OCI-LY7 (cell line): ENCODE measurements at regions of chr12 and their contacts with region 1.

Region 1: DNA sequence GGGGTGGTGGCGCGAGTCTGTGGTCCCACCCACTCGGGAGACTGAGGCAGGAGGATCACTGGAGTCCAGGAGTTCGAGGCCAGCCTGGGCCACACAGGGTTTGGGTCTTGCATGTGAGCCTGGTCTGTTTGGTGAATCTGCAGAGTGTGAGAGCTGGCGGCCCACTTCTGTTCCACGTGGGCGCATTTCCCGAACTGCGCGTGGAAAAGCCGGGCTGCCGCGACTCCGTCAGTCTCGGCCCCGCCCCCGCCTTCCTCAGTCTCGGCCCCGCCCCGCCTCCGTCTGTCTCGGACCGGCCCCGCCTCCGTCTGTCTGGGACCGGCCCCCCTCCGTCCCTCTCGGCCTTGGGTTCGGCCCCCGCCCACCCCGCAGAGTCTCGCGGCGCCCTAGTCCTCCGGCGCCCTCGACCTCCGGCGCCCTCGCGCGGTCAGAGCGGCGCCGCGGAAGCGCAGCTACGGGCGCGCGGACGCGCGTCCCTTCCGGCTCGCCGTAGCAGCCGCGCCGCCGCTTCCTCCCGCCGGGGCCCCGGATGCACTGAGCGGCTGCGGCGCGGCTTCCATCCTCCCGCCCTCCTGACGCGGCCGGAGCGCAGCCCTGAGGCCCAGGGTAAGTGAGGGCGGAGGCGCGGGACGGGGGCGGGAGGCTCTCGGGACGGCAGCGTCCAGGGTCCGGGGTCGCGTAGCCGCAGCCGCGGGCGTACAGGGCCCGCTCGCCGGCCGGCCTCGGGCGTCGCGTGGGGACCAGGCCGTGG is at the start of gene EP400:
- DNase-seq: peak; percentile 94
- H3K4me3 ChIP-seq: peak within 1 kb of the TSS; percentile 92
- H3K27ac ChIP-seq: peak within 1 kb of the TSS; percentile 55
- H3K4me1 ChIP-seq: peaks cover 7% of the 10 kb centered on the region
- CTCF ChIP-seq: peak; percentile 71
- total RNA-seq, gene EP400: 13.5 and 20.7 TPM in 2 replicates

Region 2: DNA sequence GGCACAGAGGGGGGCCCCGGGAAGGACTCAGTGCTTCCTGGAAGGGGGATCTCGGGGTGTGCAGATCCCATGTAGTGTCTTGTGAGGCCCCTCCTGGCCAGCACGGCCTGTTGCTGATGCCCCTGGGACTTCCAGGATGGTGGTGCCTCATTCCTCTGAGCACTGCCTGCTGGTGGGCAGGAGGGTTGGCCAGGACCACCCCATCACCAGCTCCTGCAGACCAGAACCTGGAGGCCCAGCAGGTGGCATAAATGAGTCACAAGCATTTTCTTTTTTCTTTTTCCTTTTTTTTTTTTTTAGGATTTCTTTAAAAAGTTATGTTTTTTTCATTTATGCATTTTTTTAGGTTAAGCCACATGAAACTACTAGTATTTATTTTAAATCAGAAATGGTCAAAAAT is 113.4 kb before region 1 on chr12:
- CTCF ChIA-PET with region 1: no interaction called
- POLR2A ChIA-PET with region 1: no interaction called
- intact Hi-C with region 1: loop called (anchors 1 kb)
- DNase-seq: peak; percentile 25
- H3K4me3 ChIP-seq: no peak overlapping the region
- H3K27ac ChIP-seq: no peak overlapping the region
- H3K4me1 ChIP-seq: no peaks in the 10 kb centered on the region
- CTCF ChIP-seq: peak; percentile 75

Region 3: DNA sequence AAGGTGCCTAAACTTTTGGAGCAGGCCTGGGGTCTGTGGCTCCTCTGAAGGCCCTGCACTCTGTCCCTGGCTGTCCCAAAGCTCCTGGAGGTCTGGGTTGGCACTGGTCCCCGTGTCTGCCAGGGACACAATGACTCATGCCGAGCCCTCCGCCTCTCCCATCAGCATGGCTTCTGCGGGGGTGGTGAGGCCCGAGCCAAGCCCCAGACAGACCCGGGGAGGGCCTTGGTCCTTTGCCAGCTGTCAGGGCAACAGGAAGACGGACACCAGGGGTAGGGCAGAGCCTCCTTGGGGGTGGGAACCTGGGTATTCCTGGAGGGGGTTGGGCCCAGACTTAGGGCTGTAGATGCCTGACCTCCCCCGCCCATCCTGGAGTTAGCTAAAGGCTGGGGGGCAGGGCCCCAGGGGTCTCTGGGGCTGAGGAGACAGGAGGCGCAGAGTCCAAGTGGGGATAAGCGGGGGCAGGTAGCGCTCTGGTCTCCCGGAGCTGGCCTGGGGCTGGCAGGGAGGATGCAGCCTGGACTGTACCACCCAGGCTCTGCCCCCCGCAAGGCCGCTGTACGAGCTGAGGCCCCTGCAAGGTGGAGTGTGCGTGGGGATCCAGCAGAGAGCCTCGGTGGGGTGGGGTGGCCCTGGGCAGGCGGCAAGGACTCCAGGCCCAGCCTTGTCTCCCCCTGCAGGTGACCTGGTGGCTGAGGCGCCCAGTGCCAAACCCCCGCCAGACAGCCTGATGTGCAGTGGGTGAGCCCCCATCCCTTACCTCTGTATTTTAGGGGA is 36.9 kb before region 1 on chr12:
- CTCF ChIA-PET with region 1: no interaction called
- POLR2A ChIA-PET with region 1: no interaction called
- intact Hi-C with region 1: no loop called
- DNase-seq: no peak
- H3K4me3 ChIP-seq: no peak overlapping the region
- H3K27ac ChIP-seq: no peak overlapping the region
- H3K4me1 ChIP-seq: no peaks in the 10 kb centered on the region
- CTCF ChIP-seq: no peak

Region 4: DNA sequence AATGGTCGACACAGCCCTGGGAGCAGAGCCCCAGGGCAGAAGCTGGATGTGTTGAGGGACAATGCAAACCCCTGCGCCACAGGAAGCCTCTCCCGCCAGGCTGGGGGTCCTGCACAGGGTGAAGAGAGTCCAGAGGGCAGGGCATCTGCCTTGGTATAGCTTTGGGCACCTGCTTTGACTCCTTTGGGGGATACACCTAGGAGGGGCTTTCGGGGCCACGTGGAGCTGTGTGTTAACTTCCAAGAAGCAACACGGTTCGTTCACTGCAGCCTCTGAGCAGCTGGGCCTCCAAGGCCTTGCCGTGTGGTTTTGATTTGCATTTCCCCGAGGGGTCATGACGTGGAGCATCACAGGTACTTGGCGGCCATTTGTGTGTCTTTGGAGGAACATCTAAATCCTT is 26.3 kb before region 1 on chr12:
- CTCF ChIA-PET with region 1: no interaction called
- POLR2A ChIA-PET with region 1: no interaction called
- intact Hi-C with region 1: no loop called
- DNase-seq: peak; percentile 78
- H3K4me3 ChIP-seq: peak overlapping the region; percentile 9
- H3K27ac ChIP-seq: no peak overlapping the region
- H3K4me1 ChIP-seq: peaks cover 25% of the 10 kb centered on the region
- CTCF ChIP-seq: no peak

Region 5: GRCh38 chr12:132071040-132071810 is 121.6 kb after region 1 on chr12:
- CTCF ChIA-PET with region 1: no interaction called
- POLR2A ChIA-PET with region 1: no interaction called
- intact Hi-C with region 1: no loop called
- DNase-seq: peak; percentile 84
- H3K4me3 ChIP-seq: peak overlapping the region; percentile 54
- H3K27ac ChIP-seq: peak overlapping the region; percentile 96
- H3K4me1 ChIP-seq: peaks cover 54% of the 10 kb centered on the region
- CTCF ChIP-seq: no peak